Mammary epithelial cell (primary cell): ENCODE measurements at regions of chrX and their contacts with region 1.

Region 1: GRCh38 chrX:65607070-65607742 is 60.2 kb upstream of the MSN start:
- DNase-seq: peak; percentile 71
- H3K4me3 ChIP-seq: no peak overlapping the region
- H3K27ac ChIP-seq: no peak overlapping the region
- H3K4me1 ChIP-seq: peaks cover 20% of the 10 kb centered on the region
- H3K27me3 ChIP-seq: no peaks in the 10 kb centered on the region
- CTCF ChIP-seq: no peak

Region 2: GRCh38 chrX:65644621-65645270 is 37.5 kb after region 1 on chrX:
- CTCF ChIA-PET with region 1: no interaction called
- dilution Hi-C with region 1: no loop called
- in situ Hi-C with region 1: no loop called
- intact Hi-C with region 1: loop called (anchors 5 kb)
- DNase-seq: peak; percentile 81
- H3K4me3 ChIP-seq: no peak overlapping the region
- H3K27ac ChIP-seq: peak overlapping the region; percentile 15
- H3K4me1 ChIP-seq: peaks cover 29% of the 10 kb centered on the region
- H3K27me3 ChIP-seq: no peaks in the 10 kb centered on the region
- CTCF ChIP-seq: no peak